HEK293 (cell line): ENCODE measurements at regions of chr1 and their contacts with region 1.

Region 1: GRCh38 chr1:28877132-28877781 is 37.1 kb upstream of the EPB41 start:
- H3K4me3 ChIP-seq: no peak overlapping the region
- H3K27ac ChIP-seq: no peak overlapping the region
- H3K4me1 ChIP-seq: no peaks in the 10 kb centered on the region
- CTCF ChIP-seq: peak; percentile 89

Region 2: DNA sequence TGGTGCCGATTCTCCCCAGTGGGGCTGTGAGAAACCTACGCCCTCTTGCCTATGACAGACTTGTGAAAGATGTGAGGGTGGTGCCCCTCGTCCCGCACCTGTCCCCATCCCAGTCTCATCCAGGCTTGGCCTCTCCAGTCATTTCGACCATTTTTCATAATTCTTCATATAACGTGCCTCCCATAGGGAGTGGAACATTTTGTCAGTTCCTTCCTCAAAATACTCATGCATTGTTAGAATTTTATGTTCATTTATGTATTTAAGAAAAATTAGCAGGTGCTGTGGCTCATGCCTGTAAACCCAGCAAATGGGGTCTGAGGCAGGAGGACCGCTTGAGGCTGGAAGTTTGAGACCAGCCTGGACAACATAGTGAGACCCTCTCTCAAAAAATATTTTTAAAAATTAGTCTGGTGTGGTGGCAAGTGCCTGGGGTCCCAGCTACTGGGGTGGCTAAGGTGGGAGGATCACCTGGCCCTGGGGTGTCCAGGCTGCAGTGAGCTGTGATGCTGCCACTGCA is 962.1 kb before region 1 on chr1:
- CTCF ChIA-PET with region 1: no interaction called
- POLR2A ChIA-PET with region 1: no interaction called
- H3K4me3 ChIP-seq: no peak overlapping the region
- H3K27ac ChIP-seq: no peak overlapping the region; the same call in 1 of the 2 replicates
- H3K4me1 ChIP-seq: no peaks in the 10 kb centered on the region
- CTCF ChIP-seq: 0 out of 2 replicates have a peak, but pooled peaks have one; percentile 14

Region 3: DNA sequence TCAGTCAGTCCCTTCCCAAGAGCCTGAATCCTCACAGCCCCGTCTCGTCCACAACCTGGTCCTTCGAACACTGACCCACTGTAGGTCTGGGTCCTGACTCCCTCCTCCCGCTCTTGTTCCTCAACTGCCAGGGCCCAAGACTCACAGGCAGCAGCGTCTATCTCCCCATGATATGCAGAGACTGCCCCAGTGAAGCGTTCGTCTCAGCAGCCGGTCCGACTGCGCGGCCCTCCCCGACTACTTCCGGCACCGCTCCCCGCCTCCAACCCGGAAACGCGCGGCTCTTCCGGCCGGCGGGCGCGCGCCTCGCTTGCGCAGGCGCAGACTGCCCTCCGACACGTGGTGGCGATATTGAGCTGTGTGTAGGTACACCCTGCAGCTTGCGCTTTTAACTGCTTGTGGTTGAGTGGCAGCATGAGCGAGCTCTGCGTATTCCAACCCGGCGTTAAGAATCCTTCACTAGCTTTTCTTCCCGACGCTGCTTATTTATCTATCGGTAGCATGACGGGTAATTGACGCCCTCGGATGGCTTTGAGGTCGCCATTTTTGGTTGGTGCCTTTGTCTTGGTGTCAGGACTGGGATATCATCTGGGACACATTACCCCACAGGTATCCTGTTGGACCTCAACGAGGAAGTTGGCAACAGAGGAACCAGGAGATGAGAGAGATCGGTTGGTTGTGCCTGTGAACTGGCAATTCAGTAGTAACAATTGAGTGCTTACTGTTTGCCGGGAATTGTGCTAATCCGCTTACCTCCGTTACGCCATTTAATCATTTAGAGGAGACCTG is 234.2 kb before region 1 on chr1 and contains the start of gene TAF12:
- CTCF ChIA-PET with region 1: interaction called, 13 read pairs
- POLR2A ChIA-PET with region 1: interaction called, 23 read pairs
- H3K4me3 ChIP-seq: peak within 1 kb of the TSS; percentile 75
- H3K27ac ChIP-seq: peak within 1 kb of the TSS; percentile 65
- H3K4me1 ChIP-seq: no peaks in the 10 kb centered on the region; the same call in 1 of the 2 replicates
- CTCF ChIP-seq: peak; percentile 95

Region 4: DNA sequence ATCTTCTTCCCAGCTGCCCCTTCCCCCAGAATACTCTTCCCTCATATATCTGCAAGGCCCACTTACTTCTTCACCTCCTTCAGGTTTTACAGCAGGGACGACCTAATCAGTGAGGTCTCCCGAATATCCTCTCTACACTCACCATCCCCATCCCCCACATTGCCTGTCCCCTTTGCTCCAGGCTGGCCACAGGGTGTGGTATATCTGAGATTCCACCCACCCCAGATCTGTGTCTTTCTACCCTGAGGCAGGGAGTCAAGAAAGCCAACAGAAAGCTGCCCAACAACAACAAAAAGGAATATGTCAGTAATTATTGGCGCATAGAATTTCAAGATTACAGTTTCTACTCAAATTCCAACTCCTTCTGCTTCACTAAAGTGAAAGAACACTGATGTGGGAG is 95.2 kb before region 1 on chr1:
- CTCF ChIA-PET with region 1: interaction called, 167 read pairs
- POLR2A ChIA-PET with region 1: interaction called, 7 read pairs
- H3K4me3 ChIP-seq: no peak overlapping the region
- H3K27ac ChIP-seq: no peak overlapping the region
- H3K4me1 ChIP-seq: no peaks in the 10 kb centered on the region
- CTCF ChIP-seq: no peak

Region 5: GRCh38 chr1:28860332-28861073 is 16.8 kb before region 1 on chr1:
- CTCF ChIA-PET with region 1: interaction called, 20 read pairs
- POLR2A ChIA-PET with region 1: no interaction called
- H3K4me3 ChIP-seq: no peak overlapping the region
- H3K27ac ChIP-seq: no peak overlapping the region
- H3K4me1 ChIP-seq: peaks cover 8% of the 10 kb centered on the region
- CTCF ChIP-seq: no peak

Region 6: GRCh38 chr1:28976248-28976647 is 99.0 kb after region 1 on chr1:
- CTCF ChIA-PET with region 1: no interaction called
- POLR2A ChIA-PET with region 1: no interaction called
- H3K4me3 ChIP-seq: no peak overlapping the region
- H3K27ac ChIP-seq: no peak overlapping the region
- H3K4me1 ChIP-seq: peaks cover 12% of the 10 kb centered on the region
- CTCF ChIP-seq: no peak

Region 7: DNA sequence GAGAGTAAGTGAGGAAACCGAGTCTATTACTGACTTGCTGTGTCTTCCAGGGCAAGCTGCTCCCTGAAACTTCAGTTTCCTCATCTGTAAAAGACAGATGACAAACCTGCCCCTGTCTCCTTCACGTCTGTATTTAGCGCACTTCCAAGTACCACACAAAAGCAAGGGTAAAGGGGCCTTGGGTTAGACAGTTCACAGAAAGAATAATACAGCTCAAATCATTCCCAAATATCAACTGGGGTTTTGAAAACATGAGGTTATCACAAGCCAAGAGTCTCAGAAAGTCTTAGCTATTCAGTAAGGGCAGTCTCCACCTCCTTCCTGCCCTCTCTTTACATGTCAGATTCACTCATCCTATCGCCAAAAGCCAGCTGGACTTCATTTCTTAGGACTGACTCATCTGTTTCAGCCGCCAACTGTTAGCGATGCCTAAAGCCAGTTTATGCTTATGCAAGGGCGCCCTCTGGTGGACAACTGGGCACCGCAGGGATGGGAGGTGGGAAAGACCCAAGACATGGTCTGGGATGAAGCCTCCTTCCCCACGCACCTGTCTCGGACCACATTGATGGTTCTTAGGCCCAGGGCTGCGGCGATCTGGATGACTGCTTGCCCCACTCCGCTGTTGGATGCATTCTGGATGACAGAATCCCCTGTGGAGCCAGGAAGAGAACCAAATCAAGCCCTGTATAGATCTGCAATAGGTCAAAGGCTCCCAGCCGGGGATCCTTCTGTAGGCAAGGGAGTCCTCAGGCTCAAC is 325.5 kb after region 1 on chr1:
- CTCF ChIA-PET with region 1: interaction called, 159 read pairs
- POLR2A ChIA-PET with region 1: interaction called, 8 read pairs
- H3K4me3 ChIP-seq: no peak overlapping the region
- H3K27ac ChIP-seq: no peak overlapping the region
- H3K4me1 ChIP-seq: no peaks in the 10 kb centered on the region
- CTCF ChIP-seq: peak; percentile 89